ENCODE measurements at regions of chr16 and their contacts with region 1.

Region 1: DNA sequence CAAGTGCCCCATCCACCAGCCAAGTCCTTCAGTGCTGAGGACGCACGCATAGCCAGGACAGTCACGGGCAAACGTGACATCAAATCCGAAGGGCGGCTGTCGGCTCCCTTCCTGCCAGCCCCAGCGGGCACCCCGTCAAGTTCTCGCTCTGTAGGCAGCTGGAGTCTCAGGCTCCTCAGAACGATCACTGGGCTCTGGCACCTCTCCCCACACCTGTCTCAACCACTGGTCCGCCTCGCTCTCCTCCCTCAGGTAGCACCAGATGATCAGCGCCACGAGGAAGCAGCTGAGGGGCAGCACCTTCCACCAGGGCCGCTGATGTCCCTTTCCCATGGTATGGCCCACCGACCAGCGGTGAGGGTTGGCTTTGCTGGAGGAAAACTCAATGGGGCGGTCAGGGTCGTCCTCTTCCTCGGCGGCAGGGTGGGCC is 421 bp downstream of the UQCC4 start:
- DNase-seq: peak; percentile 32
- ATAC-seq: no peak
- H3K4me3 Mint-ChIP-seq: peak overlapping the region; percentile 84
- H3K27ac Mint-ChIP-seq: peak overlapping the region; percentile 70
- H3K4me1 Mint-ChIP-seq: peaks cover 25% of the 10 kb centered on the region
- H3K27me3 Mint-ChIP-seq: no peaks in the 10 kb centered on the region

Region 2: DNA sequence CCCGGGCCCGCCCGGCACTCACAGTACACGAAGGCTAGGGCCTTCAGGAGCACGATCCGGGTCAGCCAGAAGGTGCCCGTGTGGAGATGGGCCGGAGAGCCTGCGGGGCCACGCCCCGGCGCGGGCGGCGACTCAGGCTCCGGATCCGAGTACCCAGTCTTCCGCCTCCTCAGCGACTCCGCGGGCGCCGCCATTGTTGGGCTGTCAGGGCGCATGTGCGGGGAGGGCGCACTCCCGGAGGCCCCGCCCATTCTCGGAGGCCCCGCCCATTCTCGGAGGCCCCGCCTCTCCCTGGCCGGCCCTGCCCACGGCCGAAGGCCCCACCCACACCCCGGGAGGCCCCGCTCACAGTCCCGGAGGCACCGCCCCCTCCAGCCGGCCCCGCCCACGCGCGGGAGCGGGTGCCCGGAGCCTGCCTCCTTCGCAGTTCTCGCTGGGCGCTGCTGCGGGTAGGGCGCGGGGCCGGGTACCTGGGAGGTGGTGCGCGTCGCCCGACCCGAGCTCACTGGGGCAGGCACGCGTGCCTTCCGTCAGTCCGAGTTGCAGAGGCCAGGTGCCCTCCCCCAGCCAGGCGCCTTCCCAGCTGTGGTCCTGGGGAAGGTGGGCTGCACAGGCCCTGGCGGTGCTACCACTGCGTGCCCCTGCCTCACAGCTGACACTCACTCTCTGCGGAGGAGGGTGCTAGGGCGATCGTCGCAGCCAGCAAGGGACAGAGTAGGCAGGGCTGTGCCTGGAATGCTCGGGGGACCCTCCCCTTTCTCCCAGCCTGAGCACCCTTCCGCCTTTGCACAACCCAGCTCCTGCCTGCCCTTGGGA is 449.2 kb before region 1 on chr16 and contains the start of gene LMF1:
- CTCF ChIA-PET with region 1: no interaction called
- POLR2A ChIA-PET with region 1: no interaction called
- intact Hi-C with region 1: loop called in 1 of 2 experiments (anchors 2 kb)
- DNase-seq: peak; percentile 98
- ATAC-seq: peak; percentile 93
- H3K4me3 Mint-ChIP-seq: peak within 1 kb of the TSS; percentile 76
- H3K27ac Mint-ChIP-seq: peak within 1 kb of the TSS; percentile 78
- H3K4me1 Mint-ChIP-seq: peaks cover 15% of the 10 kb centered on the region
- H3K27me3 Mint-ChIP-seq: no peaks in the 10 kb centered on the region
- total RNA-seq, gene LMF1: 9.5 to 12.2 TPM

Region 3: DNA sequence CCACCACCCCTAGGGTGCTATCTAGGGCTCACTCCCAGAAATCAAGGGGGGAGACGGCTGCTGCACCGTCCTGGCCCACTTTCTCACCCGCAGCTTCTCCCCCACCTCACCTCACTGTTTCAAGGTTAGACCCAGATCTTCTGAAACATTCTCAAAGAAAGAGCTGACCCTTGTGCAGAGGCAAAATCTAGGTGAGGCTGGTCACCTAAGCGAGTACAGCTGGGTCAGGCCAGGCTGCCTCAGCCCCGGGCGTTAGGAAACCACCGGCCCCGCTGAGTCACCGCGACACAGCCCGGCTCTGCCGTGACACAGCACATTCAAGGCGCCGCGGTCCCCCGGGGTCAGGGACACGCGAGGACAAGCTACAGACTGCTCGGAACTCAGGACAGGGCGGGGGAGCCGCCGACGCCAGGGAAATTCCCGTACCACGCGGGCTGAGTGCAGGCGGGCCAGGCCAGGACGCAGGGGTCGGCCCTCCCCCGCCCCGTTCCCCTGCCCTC is 41.3 kb before region 1 on chr16:
- CTCF ChIA-PET with region 1: interaction called, 4 read pairs
- POLR2A ChIA-PET with region 1: no interaction called
- intact Hi-C with region 1: loop called in 1 of 2 experiments (anchors 1 kb)
- DNase-seq: peak; percentile 87
- ATAC-seq: peak; percentile 74
- H3K4me3 Mint-ChIP-seq: peak overlapping the region; percentile 87
- H3K27ac Mint-ChIP-seq: peak overlapping the region; percentile 91
- H3K4me1 Mint-ChIP-seq: peaks cover 17% of the 10 kb centered on the region
- H3K27me3 Mint-ChIP-seq: no peaks in the 10 kb centered on the region

Region 4: GRCh38 chr16:1533443-1533951 is 113.4 kb after region 1 on chr16 and contains the start of gene TMEM204:
- CTCF ChIA-PET with region 1: no interaction called
- POLR2A ChIA-PET with region 1: no interaction called
- intact Hi-C with region 1: loop called in 1 of 2 experiments (anchors 2 kb)
- DNase-seq: peak; percentile 66
- ATAC-seq: peak; percentile 25
- H3K4me3 Mint-ChIP-seq: peak within 1 kb of the TSS; percentile 95
- H3K27ac Mint-ChIP-seq: peak within 1 kb of the TSS; percentile 94
- H3K4me1 Mint-ChIP-seq: peaks cover 39% of the 10 kb centered on the region
- H3K27me3 Mint-ChIP-seq: no peaks in the 10 kb centered on the region
- total RNA-seq, gene TMEM204: 12.6 to 17.5 TPM

Region 5: GRCh38 chr16:1705688-1706385 is 285.7 kb after region 1 on chr16 and contains the start of gene MAPK8IP3:
- CTCF ChIA-PET with region 1: interaction called, 5 read pairs
- POLR2A ChIA-PET with region 1: interaction called, 3 read pairs
- intact Hi-C with region 1: loop called in 1 of 2 experiments (anchors 1 kb)
- DNase-seq: peak; percentile 96
- ATAC-seq: peak; percentile 80
- H3K4me3 Mint-ChIP-seq: peak within 1 kb of the TSS; percentile 92
- H3K27ac Mint-ChIP-seq: peak within 1 kb of the TSS; percentile 90
- H3K4me1 Mint-ChIP-seq: peaks cover 32% of the 10 kb centered on the region
- H3K27me3 Mint-ChIP-seq: no peaks in the 10 kb centered on the region
- total RNA-seq, gene MAPK8IP3: 56.7 to 57.6 TPM

Region 6: GRCh38 chr16:1971796-1972489 is 551.8 kb after region 1 on chr16 and contains the start of gene TBL3:
- CTCF ChIA-PET with region 1: no interaction called
- POLR2A ChIA-PET with region 1: no interaction called
- intact Hi-C with region 1: loop called in 1 of 2 experiments (anchors 1 kb)
- DNase-seq: peak; percentile 98
- ATAC-seq: peak; percentile 97
- H3K4me3 Mint-ChIP-seq: peak within 1 kb of the TSS; percentile 99
- H3K27ac Mint-ChIP-seq: peak within 1 kb of the TSS; percentile 99
- H3K4me1 Mint-ChIP-seq: peaks cover 16% of the 10 kb centered on the region
- H3K27me3 Mint-ChIP-seq: no peaks in the 10 kb centered on the region
- total RNA-seq, gene TBL3: 47.4 to 48.6 TPM

Measured in activated CD4-positive, alpha-beta T cell treated with anti-CD3 and anti-CD28 coated beads for 36 hours (primary cell).